WTC11 (cell line): ENCODE measurements at regions of chr10 and their contacts with region 1.

Region 1: GRCh38 chr10:62816331-62817120 is at the start of gene EGR2:
- DNase-seq: peak; percentile 88
- ATAC-seq: peak; percentile 67
- H3K4me3 Mint-ChIP-seq: peak within 1 kb of the TSS; percentile 95
- H3K27ac Mint-ChIP-seq: no peak within 1 kb of the TSS
- H3K4me1 Mint-ChIP-seq: peaks cover 30% of the 10 kb centered on the region
- H3K27me3 Mint-ChIP-seq: peaks cover 93% of the 10 kb centered on the region
- CTCF ChIP-seq: no peak
- total RNA-seq, gene EGR2: 0.92 to 1.6 TPM (median 1.6 TPM) in 3 replicates

Region 2: GRCh38 chr10:62594093-62594520 is 222.4 kb before region 1 on chr10:
- CTCF ChIA-PET with region 1: interaction called, 32 read pairs
- POLR2A ChIA-PET with region 1: no interaction called
- DNase-seq: peak; percentile 69
- ATAC-seq: peak; percentile 97
- H3K4me3 Mint-ChIP-seq: no peak overlapping the region
- H3K27ac Mint-ChIP-seq: no peak overlapping the region
- H3K4me1 Mint-ChIP-seq: peaks cover 2% of the 10 kb centered on the region; the same call in 1 of the 2 replicates
- H3K27me3 Mint-ChIP-seq: no peaks in the 10 kb centered on the region
- CTCF ChIP-seq: peak; percentile 64

Region 3: DNA sequence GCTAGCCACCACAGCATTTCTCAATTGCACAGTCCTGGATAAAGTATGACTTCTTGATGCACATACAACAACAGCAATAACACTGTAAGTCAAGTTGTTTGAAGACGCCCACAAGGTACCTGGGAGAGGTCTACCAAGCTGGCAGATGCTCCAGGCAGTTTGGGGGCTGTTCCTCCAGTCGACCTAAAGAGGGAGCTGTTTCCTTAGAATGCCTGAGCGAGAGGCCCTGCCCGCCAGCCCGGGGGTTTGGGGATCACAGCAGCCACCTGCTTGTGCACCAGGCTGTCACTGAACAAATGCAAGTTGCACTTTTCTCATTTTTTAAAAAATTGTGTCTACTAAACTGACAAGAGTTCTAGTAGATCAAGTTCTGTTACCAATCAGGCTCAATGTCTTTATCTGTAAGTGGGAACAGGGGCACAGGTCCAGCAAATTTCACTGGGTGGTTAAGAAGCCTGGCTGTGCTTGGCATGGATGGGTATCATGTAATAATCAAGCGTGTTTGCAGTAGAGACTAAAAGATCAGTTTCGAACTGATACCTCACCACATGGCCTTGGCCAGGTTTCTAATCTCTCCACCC is 205.8 kb before region 1 on chr10:
- CTCF ChIA-PET with region 1: interaction called, 99 read pairs
- POLR2A ChIA-PET with region 1: interaction called, 3 read pairs
- DNase-seq: peak; percentile 79
- ATAC-seq: peak; percentile 95
- H3K4me3 Mint-ChIP-seq: no peak overlapping the region; the same call in 1 of the 2 replicates
- H3K27ac Mint-ChIP-seq: no peak overlapping the region
- H3K4me1 Mint-ChIP-seq: peaks cover 5% of the 10 kb centered on the region; the same call in 1 of the 2 replicates
- H3K27me3 Mint-ChIP-seq: peaks cover 16% of the 10 kb centered on the region
- CTCF ChIP-seq: peak; percentile 68

Region 4: GRCh38 chr10:62726142-62726541 is 90.4 kb before region 1 on chr10:
- CTCF ChIA-PET with region 1: no interaction called
- POLR2A ChIA-PET with region 1: no interaction called
- DNase-seq: no peak
- ATAC-seq: no peak
- H3K4me3 Mint-ChIP-seq: no peak overlapping the region
- H3K27ac Mint-ChIP-seq: no peak overlapping the region
- H3K4me1 Mint-ChIP-seq: no peaks in the 10 kb centered on the region
- H3K27me3 Mint-ChIP-seq: no peaks in the 10 kb centered on the region
- CTCF ChIP-seq: no peak

Region 5: DNA sequence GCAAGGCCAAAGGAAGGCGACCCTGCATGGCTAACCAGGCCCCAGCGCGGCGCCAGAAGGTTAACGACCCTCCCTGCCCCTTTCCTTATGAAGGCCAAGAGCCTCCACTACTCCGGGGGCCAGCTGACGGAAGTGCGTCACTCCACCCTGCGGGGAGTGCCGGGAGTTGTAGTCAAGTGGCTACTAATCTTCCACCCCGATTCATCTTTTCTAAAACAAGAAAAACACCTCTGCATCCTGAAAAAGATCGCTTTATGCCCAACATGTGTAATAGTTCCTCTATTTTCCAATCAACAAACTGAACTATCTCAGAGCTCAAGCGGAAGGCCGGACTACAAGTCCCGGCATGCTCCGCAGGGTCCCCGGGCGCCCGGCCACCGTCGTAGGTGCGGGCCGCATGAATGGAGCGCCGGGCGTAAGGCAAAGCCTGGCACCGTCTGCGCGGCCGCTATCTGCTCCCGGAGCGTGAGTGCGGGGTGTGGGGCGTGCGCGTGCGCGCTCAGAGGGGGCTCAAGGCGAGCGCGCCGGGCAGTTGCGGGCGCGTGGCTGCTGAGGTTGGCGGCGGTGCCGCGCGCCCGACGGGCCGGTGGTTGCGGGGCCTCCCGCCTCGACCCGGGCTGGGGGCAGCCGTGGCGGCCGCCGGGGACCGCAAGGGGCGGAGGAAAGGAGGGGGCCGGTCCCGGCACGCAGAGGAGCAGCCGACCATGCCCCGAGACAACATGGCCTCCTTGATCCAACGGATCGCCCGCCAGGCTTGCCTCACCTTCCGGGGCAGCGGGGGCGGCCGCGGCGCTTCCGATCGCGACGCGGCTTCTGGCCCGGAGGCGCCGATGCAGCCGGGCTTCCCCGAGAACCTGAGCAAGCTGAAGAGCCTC is 11.9 kb before region 1 on chr10 and contains the start of gene ADO:
- CTCF ChIA-PET with region 1: interaction called, 55 read pairs
- POLR2A ChIA-PET with region 1: interaction called, 28 read pairs
- DNase-seq: peak; percentile 85
- ATAC-seq: peak; percentile 86
- H3K4me3 Mint-ChIP-seq: peak within 1 kb of the TSS; percentile 94
- H3K27ac Mint-ChIP-seq: peak within 1 kb of the TSS; percentile 99
- H3K4me1 Mint-ChIP-seq: peaks cover 48% of the 10 kb centered on the region
- H3K27me3 Mint-ChIP-seq: no peaks in the 10 kb centered on the region
- CTCF ChIP-seq: no peak
- total RNA-seq, gene ADO: 29.3 to 30.6 TPM (median 29.8 TPM) in 3 replicates

Region 6: DNA sequence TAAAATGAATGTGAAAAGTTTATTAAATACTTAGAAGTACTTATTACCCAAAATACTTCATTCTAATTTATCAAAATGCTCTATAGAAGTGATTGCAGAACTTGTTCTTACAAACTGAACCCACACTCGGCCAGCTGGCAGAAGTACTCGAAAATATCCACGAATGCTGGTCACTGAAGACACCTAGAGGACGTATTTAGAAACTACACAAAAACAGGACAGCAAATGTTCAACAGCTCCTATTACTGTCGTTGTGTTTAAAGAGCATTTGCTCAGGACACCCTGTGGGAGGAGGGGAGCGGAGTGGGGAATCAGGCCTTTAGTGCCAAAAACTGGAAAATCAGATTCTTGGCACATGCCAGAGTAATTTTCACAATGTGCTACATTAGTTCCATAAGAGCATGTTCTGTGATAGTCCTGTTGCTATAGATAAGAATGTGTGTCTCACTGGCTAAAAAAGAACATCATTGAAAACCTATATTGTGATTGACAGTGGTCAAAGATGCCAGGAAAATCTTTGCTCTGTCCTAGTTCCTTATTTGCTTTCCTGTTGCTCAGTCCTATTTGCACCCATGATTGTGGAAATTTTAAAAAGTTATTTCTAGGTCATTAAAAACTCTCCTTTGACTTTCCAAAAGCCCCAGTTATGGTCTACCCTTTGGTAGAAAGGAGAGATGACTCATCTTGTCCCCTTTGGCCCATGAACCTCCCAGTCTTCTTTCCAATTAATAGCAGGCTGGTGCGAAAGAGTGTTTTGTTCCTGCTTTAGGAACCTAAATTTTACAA is 267.6 kb after region 1 on chr10:
- CTCF ChIA-PET with region 1: interaction called, 31 read pairs
- POLR2A ChIA-PET with region 1: no interaction called
- DNase-seq: peak; percentile 28
- ATAC-seq: peak; percentile 95
- H3K4me3 Mint-ChIP-seq: no peak overlapping the region
- H3K27ac Mint-ChIP-seq: no peak overlapping the region
- H3K4me1 Mint-ChIP-seq: no peaks in the 10 kb centered on the region
- H3K27me3 Mint-ChIP-seq: no peaks in the 10 kb centered on the region
- CTCF ChIP-seq: peak; percentile 50

Region 7: GRCh38 chr10:63133056-63133820 is 316.7 kb after region 1 on chr10 and contains the start of gene NRBF2:
- CTCF ChIA-PET with region 1: interaction called, 14 read pairs
- POLR2A ChIA-PET with region 1: interaction called, 3 read pairs
- DNase-seq: peak; percentile 96
- ATAC-seq: peak; percentile 93
- H3K4me3 Mint-ChIP-seq: peak within 1 kb of the TSS; percentile 77
- H3K27ac Mint-ChIP-seq: peak within 1 kb of the TSS; percentile 74
- H3K4me1 Mint-ChIP-seq: peaks cover 29% of the 10 kb centered on the region
- H3K27me3 Mint-ChIP-seq: peaks cover 4% of the 10 kb centered on the region
- CTCF ChIP-seq: no peak
- total RNA-seq, gene NRBF2: 25.4 to 27.5 TPM (median 25.9 TPM) in 3 replicates